Activated CD4-positive, alpha-beta memory T cell treated with anti-CD3 and anti-CD28 coated beads, Interleukin-2, amount 10 ng/mL, durations not matched to agents 7 days and 5 days (primary cell): ENCODE measurements at regions of chr11 and their contacts with region 1.

Region 1: GRCh38 chr11:119284344-119285157 is 32.4 kb downstream of the MCAM start:
- DNase-seq: no peak
- H3K4me3 Mint-ChIP-seq: no peak overlapping the region
- H3K27ac Mint-ChIP-seq: peak overlapping the region; percentile 12
- H3K4me1 Mint-ChIP-seq: peaks cover 28% of the 10 kb centered on the region
- H3K27me3 Mint-ChIP-seq: no peaks in the 10 kb centered on the region

Region 2: GRCh38 chr11:119237515-119237914 is 47.0 kb before region 1 on chr11:
- CTCF ChIA-PET with region 1: no interaction called
- POLR2A ChIA-PET with region 1: no interaction called
- DNase-seq: no peak
- H3K4me3 Mint-ChIP-seq: no peak overlapping the region
- H3K27ac Mint-ChIP-seq: no peak overlapping the region
- H3K4me1 Mint-ChIP-seq: peaks cover 43% of the 10 kb centered on the region
- H3K27me3 Mint-ChIP-seq: no peaks in the 10 kb centered on the region

Region 3: GRCh38 chr11:119262668-119263351 is 21.7 kb before region 1 on chr11:
- CTCF ChIA-PET with region 1: interaction called, 15 read pairs
- POLR2A ChIA-PET with region 1: interaction called, 10 read pairs
- DNase-seq: peak; percentile 19
- H3K4me3 Mint-ChIP-seq: no peak overlapping the region
- H3K27ac Mint-ChIP-seq: no peak overlapping the region
- H3K4me1 Mint-ChIP-seq: peaks cover 56% of the 10 kb centered on the region
- H3K27me3 Mint-ChIP-seq: no peaks in the 10 kb centered on the region

Region 4: DNA sequence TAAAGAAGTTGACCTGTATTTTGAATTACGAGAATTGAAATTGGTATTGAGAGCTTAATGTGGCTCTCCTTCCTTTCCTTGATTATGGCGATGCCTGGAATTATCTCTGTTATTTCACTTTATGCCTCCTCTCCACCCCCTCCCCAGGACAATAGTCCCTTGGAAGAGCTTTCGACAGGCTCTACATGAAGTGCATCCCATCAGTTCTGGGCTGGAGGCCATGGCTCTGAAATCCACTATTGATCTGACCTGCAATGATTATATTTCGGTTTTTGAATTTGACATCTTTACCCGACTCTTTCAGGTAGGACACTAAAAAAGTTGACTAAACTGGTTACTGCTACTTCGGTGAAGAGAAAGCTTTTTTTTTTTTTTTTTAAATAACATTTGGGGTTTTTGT is 10.8 kb before region 1 on chr11:
- CTCF ChIA-PET with region 1: interaction called, 25 read pairs
- POLR2A ChIA-PET with region 1: no interaction called
- DNase-seq: no peak
- H3K4me3 Mint-ChIP-seq: no peak overlapping the region
- H3K27ac Mint-ChIP-seq: no peak overlapping the region
- H3K4me1 Mint-ChIP-seq: no peaks in the 10 kb centered on the region
- H3K27me3 Mint-ChIP-seq: no peaks in the 10 kb centered on the region

Region 5: DNA sequence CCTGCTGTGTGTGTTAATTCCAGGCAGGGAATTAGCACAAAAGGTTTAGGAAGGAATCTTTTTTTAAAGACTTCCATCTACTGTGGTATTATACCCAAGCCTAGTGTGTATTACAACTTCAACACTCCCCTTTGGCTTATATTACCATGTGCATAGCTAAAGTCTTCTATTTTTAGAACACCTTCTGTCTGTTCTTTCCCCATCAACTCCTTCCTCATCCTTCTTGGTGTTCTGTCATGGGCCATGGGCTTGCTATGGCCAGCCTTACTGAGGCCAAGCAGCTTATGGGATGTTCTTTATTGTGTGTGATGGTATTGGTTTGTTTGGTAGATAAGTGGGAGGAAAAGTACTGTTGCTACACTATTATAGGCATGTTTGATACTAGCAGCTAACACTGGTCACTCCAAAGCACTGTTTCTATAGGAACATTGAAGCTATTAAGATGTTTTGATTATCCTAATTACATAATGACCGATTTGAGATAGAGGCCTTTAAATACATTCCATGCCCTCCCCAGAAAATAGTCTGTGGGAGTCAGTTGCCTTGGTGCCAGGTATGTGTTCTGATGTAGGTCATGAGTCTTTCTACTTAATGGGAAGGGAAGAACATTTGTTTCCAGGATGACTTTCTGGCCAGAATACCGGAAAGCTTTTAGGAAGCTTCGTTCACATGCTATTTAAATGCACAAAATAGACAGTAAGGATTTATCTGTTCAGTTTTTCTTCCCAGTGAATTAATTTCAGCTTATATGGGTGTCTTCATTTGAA is 15.8 kb after region 1 on chr11:
- CTCF ChIA-PET with region 1: no interaction called
- POLR2A ChIA-PET with region 1: no interaction called
- DNase-seq: no peak
- H3K4me3 Mint-ChIP-seq: no peak overlapping the region
- H3K27ac Mint-ChIP-seq: no peak overlapping the region
- H3K4me1 Mint-ChIP-seq: peaks cover 4% of the 10 kb centered on the region
- H3K27me3 Mint-ChIP-seq: no peaks in the 10 kb centered on the region

Region 6: GRCh38 chr11:119509969-119510401 is 225.4 kb after region 1 on chr11:
- CTCF ChIA-PET with region 1: no interaction called
- POLR2A ChIA-PET with region 1: no interaction called
- DNase-seq: peak; percentile 24
- H3K4me3 Mint-ChIP-seq: no peak overlapping the region
- H3K27ac Mint-ChIP-seq: no peak overlapping the region
- H3K4me1 Mint-ChIP-seq: peaks cover 13% of the 10 kb centered on the region
- H3K27me3 Mint-ChIP-seq: peaks cover 3% of the 10 kb centered on the region

Region 7: GRCh38 chr11:119990309-119991021 is 705.9 kb after region 1 on chr11:
- CTCF ChIA-PET with region 1: no interaction called
- POLR2A ChIA-PET with region 1: no interaction called
- DNase-seq: no peak
- H3K4me3 Mint-ChIP-seq: no peak overlapping the region
- H3K27ac Mint-ChIP-seq: no peak overlapping the region
- H3K4me1 Mint-ChIP-seq: no peaks in the 10 kb centered on the region
- H3K27me3 Mint-ChIP-seq: peaks cover 9% of the 10 kb centered on the region